ENCODE measurements at regions of chr19 and their contacts with region 1.

Region 1: DNA sequence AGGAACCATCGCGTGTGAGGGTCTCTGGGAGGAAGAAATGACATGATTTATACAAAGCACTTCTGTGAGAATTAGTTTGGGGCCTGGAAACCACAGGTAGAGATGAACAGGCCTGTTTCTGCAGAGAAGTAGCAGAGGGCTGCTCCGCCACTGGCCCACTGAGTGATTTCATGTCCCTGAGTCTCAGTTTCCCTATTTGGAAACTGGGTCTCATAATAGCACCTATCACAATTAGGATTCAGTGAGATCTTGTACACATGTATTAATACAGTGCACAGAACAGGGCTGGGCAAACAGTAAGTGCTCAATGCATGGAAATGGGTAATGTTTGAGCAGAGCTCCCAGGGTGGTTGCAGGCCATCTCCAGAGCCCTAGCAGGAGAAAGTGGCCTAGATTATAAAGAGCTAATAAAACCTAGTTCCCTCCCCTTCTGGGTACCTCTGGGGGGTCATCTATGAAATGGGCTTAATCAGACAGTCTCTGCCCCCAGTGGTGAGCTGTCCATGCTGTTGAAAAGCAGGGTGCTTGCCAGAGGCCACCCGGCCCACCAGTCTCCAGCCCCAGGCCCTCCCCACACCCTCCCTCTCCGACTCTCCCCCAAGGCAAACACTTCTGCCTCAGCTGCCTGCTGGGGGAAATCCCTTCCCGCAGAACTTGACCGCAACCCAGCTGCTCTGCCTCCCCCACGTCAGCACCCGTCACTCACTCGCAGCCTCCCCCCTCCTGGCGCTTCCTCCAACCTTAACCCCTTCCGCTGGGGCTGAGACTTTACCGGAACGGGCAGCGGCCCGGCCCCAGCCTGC is 4.5 kb downstream of the BCL3 start:
- DNase-seq: peak; percentile 96
- H3K4me3 Mint-ChIP-seq: peak overlapping the region; percentile 93
- H3K27ac Mint-ChIP-seq: peak overlapping the region; percentile 86
- H3K4me1 Mint-ChIP-seq: peaks cover 49% of the 10 kb centered on the region
- H3K27me3 Mint-ChIP-seq: no peaks in the 10 kb centered on the region

Region 2: GRCh38 chr19:44808463-44809371 is 55.7 kb after region 1 on chr19 and contains the start of gene BCAM:
- intact Hi-C with region 1: no loop called
- DNase-seq: no peak
- H3K4me3 Mint-ChIP-seq: no peak within 1 kb of the TSS
- H3K27ac Mint-ChIP-seq: no peak within 1 kb of the TSS
- H3K4me1 Mint-ChIP-seq: no peaks in the 10 kb centered on the region
- H3K27me3 Mint-ChIP-seq: peaks cover 13% of the 10 kb centered on the region
- total RNA-seq, gene BCAM: not detected in 2 replicates

Region 3: GRCh38 chr19:44890366-44891015 is 137.5 kb after region 1 on chr19:
- intact Hi-C with region 1: loop called (anchors 2 kb)
- DNase-seq: peak; percentile 100
- H3K4me3 Mint-ChIP-seq: peak overlapping the region; percentile 77
- H3K27ac Mint-ChIP-seq: peak overlapping the region; percentile 97
- H3K4me1 Mint-ChIP-seq: peaks cover 19% of the 10 kb centered on the region
- H3K27me3 Mint-ChIP-seq: no peaks in the 10 kb centered on the region